ENCODE measurements at regions of chr2 and their contacts with region 1.

Region 1: GRCh38 chr2:218406209-218406948 is 6.7 kb downstream of the CTDSP1 start:
- DNase-seq: peak; percentile 96
- H3K4me3 Mint-ChIP-seq: peak overlapping the region; percentile 82
- H3K27ac Mint-ChIP-seq: peak overlapping the region; percentile 75
- H3K4me1 Mint-ChIP-seq: peaks cover 34% of the 10 kb centered on the region
- H3K27me3 Mint-ChIP-seq: peaks cover 2% of the 10 kb centered on the region

Region 2: DNA sequence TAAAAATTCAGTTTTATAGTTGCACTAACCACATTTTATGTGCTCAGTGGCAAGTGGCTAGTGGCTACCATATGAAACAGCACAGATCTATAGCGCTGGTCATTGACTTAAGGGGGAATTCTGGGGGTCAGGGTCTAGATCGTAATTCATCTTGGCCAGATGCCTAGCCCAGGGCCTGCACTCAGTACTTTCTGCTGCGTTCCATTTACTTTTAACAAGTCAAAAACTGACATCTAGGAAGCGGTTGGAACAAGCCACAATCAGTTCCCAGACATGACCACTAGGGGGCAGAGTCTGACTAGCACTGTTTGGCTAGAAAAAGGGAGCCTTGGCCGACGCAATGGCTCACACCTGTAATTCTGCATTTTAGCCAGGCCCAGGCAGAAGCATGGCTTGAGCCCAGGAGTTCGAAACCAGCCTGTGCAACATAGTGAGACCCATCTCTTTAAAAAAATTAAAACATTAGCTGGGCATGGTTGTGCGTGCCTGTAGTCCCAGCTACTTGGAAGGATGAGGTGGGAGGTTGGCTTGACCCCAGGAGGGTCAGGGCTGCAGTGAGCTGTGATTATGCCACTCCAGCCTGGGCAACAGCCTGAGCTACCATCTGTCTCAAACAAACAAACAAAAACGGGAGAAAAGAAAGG is 105.1 kb before region 1 on chr2:
- CTCF ChIA-PET with region 1: interaction called, 5 read pairs
- intact Hi-C with region 1: loop called (anchors 1 kb)
- DNase-seq: peak; percentile 97
- H3K4me3 Mint-ChIP-seq: no peak overlapping the region
- H3K27ac Mint-ChIP-seq: no peak overlapping the region
- H3K4me1 Mint-ChIP-seq: peaks cover 5% of the 10 kb centered on the region
- H3K27me3 Mint-ChIP-seq: no peaks in the 10 kb centered on the region

Region 3: GRCh38 chr2:218312267-218312756 is 94.1 kb before region 1 on chr2:
- CTCF ChIA-PET with region 1: no interaction called
- intact Hi-C with region 1: no loop called
- DNase-seq: no peak
- H3K4me3 Mint-ChIP-seq: no peak overlapping the region
- H3K27ac Mint-ChIP-seq: no peak overlapping the region
- H3K4me1 Mint-ChIP-seq: peaks cover 25% of the 10 kb centered on the region
- H3K27me3 Mint-ChIP-seq: no peaks in the 10 kb centered on the region

Region 4: GRCh38 chr2:218516614-218517013 is 110.2 kb after region 1 on chr2:
- CTCF ChIA-PET with region 1: no interaction called
- intact Hi-C with region 1: loop called (anchors 1 kb)
- DNase-seq: peak; percentile 6
- H3K4me3 Mint-ChIP-seq: no peak overlapping the region
- H3K27ac Mint-ChIP-seq: no peak overlapping the region
- H3K4me1 Mint-ChIP-seq: peaks cover 29% of the 10 kb centered on the region
- H3K27me3 Mint-ChIP-seq: no peaks in the 10 kb centered on the region

Region 5: DNA sequence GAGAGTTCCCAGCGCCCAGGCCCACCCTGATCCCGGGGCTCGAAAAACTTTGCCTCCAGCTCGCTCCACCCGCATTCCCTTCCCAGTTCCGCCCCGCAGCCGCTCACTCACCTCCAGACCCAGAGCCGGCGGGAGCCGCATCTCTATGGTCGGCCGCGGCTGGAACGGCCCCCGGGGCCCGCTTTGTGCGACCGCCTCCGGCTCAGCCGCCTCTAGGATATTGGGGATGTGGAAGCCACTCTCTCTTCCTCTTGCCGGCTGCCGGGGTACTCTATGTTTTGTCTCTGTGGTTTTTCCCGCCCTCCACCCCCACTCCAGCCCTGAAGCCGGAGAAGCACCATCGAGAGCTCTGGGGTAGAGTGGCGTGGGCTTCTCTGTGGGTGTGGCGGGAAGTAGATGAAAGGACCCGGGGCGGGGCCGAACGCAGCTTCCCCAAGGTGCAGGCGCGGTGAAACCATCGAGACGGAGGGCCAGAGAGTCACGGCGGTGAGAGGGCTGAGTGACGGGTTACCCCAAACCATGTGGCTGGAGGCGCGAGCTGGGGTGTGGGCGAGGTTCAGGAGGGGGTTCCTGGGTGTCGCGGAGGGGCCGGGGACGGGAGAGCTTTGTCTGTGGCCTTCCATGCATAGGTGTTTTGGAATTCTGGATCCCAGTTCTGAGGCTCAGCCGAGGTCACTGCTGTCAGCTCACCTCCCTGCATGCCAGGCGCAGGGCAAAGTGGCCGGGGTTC is 253.0 kb after region 1 on chr2 and contains the starts of genes BCS1L and ZNF142:
- CTCF ChIA-PET with region 1: no interaction called
- intact Hi-C with region 1: loop called (anchors 1 kb)
- DNase-seq: peak; percentile 98
- H3K4me3 Mint-ChIP-seq: peak within 1 kb of the TSS; percentile 90
- H3K27ac Mint-ChIP-seq: peak within 1 kb of the TSS; percentile 81
- H3K4me1 Mint-ChIP-seq: peaks cover 40% of the 10 kb centered on the region
- H3K27me3 Mint-ChIP-seq: no peaks in the 10 kb centered on the region
- total RNA-seq, gene BCS1L: 61.3 to 63.6 TPM
- total RNA-seq, gene ZNF142: 28.0 to 28.4 TPM

Region 6: GRCh38 chr2:218710687-218711549 is 304.5 kb after region 1 on chr2 and contains the start of gene TTLL4:
- CTCF ChIA-PET with region 1: interaction called, 3 read pairs
- intact Hi-C with region 1: loop called (anchors 1 kb)
- DNase-seq: peak; percentile 99
- H3K4me3 Mint-ChIP-seq: peak within 1 kb of the TSS; percentile 98
- H3K27ac Mint-ChIP-seq: peak within 1 kb of the TSS; percentile 80
- H3K4me1 Mint-ChIP-seq: peaks cover 15% of the 10 kb centered on the region
- H3K27me3 Mint-ChIP-seq: peaks cover 3% of the 10 kb centered on the region
- total RNA-seq, gene TTLL4: 23.7 to 24.7 TPM